GM13977 (cell line): ENCODE measurements at regions of chr6 and their contacts with region 1.

Region 1: DNA sequence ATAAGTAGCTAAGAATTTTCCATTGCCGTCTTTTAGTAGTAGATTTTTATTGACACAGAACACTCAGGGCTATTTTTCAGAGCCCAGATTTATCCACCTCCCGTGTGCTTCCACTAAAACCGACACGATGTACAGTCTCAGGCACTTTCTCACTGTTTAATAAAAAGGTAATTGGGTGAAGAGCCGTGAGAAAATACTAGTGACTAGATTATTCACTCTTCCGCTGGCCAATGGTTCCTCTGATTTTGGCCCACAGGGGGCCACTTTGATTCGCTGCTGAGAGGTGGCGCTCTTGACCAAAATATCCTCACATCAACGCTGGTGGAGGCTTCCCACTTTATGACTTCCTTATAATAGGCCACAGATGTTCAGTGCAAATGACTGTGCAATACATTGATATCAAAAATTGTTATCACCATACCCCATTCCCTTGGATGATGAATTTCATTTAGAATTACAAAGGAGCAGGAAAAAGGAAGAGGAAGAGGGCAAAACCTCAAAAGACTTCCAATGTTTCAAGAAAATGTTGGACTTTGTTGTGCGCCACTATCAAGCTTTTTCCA is 12.3 kb upstream of the HDDC2 start:
- DNase-seq: peak; percentile 34
- CTCF ChIP-seq: peak; percentile 84

Region 2: DNA sequence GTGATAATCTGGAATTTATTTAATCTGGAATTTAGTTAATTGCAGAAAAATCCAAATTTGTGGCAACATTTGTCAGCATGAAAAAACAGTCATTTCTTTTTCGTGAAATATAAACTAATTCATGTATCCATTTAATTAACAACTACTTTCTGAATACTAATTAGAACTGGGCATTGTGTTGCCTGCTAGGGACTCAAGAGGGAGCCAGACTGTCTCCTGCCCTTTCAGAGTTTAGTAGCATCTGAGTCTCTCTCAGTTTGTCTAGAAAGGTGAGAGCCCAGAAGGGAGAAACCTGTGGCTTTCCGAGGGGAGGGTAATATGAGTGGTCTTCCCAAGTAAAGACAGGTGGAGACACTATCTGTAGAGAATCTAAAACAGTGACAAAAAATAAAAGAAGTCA is 198.5 kb after region 1 on chr6:
- in situ Hi-C with region 1: loop called (anchors 25 kb)
- DNase-seq: no peak
- CTCF ChIP-seq: peak; percentile 73

Region 3: DNA sequence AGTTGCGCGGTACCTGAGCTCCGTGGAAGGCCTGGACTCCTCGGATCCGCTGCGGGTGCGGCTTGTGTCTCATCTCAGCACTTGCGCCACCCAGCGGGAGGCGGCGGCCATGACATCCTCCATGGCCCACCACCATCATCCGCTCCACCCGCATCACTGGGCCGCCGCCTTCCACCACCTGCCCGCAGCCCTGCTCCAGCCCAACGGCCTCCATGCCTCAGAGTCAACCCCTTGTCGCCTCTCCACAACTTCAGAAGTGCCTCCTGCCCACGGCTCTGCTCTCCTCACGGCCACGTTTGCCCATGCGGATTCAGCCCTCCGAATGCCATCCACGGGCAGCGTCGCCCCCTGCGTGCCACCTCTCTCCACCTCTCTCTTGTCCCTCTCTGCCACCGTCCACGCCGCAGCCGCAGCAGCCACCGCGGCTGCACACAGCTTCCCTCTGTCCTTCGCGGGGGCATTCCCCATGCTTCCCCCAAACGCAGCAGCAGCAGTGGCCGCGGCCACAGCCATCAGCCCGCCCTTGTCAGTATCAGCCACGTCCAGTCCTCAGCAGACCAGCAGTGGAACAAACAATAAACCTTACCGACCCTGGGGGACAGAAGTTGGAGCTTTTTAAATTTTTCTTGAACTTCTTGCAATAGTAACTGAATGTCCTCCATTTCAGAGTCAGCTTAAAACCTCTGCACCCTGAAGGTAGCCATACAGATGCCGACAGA is 445.2 kb after region 1 on chr6:
- in situ Hi-C with region 1: loop called (anchors 5 kb)
- DNase-seq: no peak
- CTCF ChIP-seq: peak; percentile 68

Region 4: GRCh38 chr6:125956506-125957390 is 642.6 kb after region 1 on chr6 and contains the start of gene HINT3:
- in situ Hi-C with region 1: loop called (anchors 25 kb)
- DNase-seq: peak; percentile 96
- CTCF ChIP-seq: peak; percentile 96